ENCODE measurements at regions of chr1 and their contacts with region 1.

Region 1: DNA sequence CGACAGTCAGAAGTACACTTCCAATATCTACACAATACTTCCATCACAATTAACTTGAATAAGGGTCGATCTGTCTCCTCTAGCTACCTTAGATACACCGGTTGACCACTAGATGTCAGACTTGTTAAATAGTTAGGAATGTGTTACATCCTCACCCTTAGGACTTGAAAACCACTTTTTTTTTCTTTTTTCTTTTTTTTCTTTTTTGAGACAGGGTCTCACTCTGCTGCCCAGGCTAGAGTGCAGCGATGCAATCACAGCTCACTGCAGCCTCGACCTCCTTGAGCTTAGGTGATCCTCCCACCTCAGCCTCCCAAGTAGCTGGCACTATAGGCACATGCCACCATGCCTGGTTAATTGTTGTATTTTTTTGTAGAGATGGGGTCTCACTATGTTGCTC is 120.4 kb upstream of the GREM2 start:
- DNase-seq: peak; percentile 15 to 48
- H3K4me3 ChIP-seq: no peak overlapping the region
- H3K27ac ChIP-seq: no peak overlapping the region
- H3K4me1 ChIP-seq: no peaks in the 10 kb centered on the region
- H3K27me3 ChIP-seq: peaks cover 12% of the 10 kb centered on the region; the same call in 1 of the 2 replicates
- CTCF ChIP-seq: peak; percentile 86

Region 2: GRCh38 chr1:240149484-240150094 is 582.8 kb before region 1 on chr1:
- CTCF ChIA-PET with region 1: no interaction called
- POLR2A ChIA-PET with region 1: no interaction called
- intact Hi-C with region 1: no loop called
- DNase-seq: no peak
- H3K4me3 ChIP-seq: no peak overlapping the region
- H3K27ac ChIP-seq: no peak overlapping the region
- H3K4me1 ChIP-seq: no peaks in the 10 kb centered on the region
- H3K27me3 ChIP-seq: no peaks in the 10 kb centered on the region
- CTCF ChIP-seq: peak; percentile 78

Region 3: DNA sequence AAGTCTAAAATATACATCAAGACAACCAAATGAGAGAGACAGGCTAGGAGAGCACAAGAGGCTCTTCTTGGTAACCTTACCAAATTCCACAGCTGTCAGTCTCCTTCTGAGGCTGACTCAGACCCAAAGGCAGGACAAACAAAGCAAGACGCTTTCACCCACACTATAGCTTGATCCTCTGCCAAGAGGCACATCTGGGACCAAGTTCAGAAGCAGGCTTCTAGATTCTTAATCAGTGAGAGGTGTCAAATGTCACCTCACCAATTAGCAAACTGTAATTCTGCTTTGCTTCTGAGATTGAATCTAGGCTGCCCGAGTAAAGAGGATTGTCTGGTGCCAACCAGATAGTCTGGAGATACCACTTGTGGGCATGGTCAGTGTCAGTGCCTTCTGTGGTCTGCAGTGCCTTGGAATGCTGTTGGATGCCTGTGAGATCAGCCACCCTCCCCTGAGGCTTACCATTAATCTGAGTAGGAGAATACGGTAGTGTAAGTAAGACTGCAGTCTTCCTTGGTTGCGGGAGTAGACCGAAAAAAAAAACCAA is 489.7 kb before region 1 on chr1:
- CTCF ChIA-PET with region 1: no interaction called
- POLR2A ChIA-PET with region 1: no interaction called
- intact Hi-C with region 1: no loop called
- DNase-seq: no peak
- H3K4me3 ChIP-seq: no peak overlapping the region
- H3K27ac ChIP-seq: no peak overlapping the region
- H3K4me1 ChIP-seq: no peaks in the 10 kb centered on the region
- H3K27me3 ChIP-seq: no peaks in the 10 kb centered on the region
- CTCF ChIP-seq: no peak

Region 4: GRCh38 chr1:240784776-240785175 is 52.4 kb after region 1 on chr1:
- CTCF ChIA-PET with region 1: no interaction called
- POLR2A ChIA-PET with region 1: no interaction called
- intact Hi-C with region 1: loop called (anchors 1 kb)
- DNase-seq: no peak
- H3K4me3 ChIP-seq: no peak overlapping the region
- H3K27ac ChIP-seq: no peak overlapping the region
- H3K4me1 ChIP-seq: peaks cover 16% of the 10 kb centered on the region; the same call in 1 of the 2 replicates
- H3K27me3 ChIP-seq: no peaks in the 10 kb centered on the region
- CTCF ChIP-seq: no peak

Region 5: GRCh38 chr1:240831191-240831631 is 98.8 kb after region 1 on chr1:
- CTCF ChIA-PET with region 1: no interaction called
- POLR2A ChIA-PET with region 1: no interaction called
- intact Hi-C with region 1: loop called (anchors 2 kb)
- DNase-seq: peak; percentile 9 to 69
- H3K4me3 ChIP-seq: no peak overlapping the region
- H3K27ac ChIP-seq: no peak overlapping the region
- H3K4me1 ChIP-seq: no peaks in the 10 kb centered on the region
- H3K27me3 ChIP-seq: peaks cover 29% of the 10 kb centered on the region; the same call in 1 of the 2 replicates
- CTCF ChIP-seq: no peak

Region 6: DNA sequence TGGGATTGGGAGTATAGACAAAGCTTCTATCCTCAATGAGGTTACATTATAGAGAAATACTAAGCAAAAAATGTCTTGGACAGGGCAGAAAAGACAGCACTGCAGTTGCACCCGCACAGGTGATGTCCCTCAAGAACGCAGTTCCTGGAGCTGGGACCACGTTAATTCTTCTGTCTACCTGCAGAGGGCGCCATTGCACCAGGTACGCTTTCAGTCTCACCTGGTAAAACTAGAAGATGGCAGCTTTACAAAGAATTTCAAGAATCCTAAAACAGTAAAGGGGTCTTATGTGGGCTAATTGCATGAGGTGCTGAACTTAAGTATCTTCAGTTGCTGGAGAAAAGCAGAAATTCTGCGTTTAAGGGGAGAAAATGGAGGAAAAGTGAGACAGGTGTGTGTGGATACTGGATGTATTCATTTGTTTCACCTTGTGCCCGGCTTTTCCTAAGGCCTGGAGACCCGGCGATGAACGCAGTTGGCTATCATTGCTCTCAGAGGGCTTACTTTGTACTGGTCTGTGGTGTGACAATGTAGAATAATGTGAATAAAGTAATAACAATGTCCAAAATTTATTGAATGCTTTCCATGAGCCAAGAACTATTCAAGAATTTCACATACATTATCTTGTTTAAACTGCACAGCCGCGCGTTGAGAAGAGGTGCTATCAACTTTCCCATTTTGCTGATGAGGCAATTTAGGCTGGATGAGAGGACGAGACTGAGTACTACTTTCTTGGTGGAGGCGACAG is 155.8 kb after region 1 on chr1:
- CTCF ChIA-PET with region 1: no interaction called
- POLR2A ChIA-PET with region 1: no interaction called
- intact Hi-C with region 1: loop called (anchors 1 kb)
- DNase-seq: peak in 1 of 2 experiments; percentile 47
- H3K4me3 ChIP-seq: no peak overlapping the region
- H3K27ac ChIP-seq: no peak overlapping the region
- H3K4me1 ChIP-seq: no peaks in the 10 kb centered on the region
- H3K27me3 ChIP-seq: no peaks in the 10 kb centered on the region
- CTCF ChIP-seq: peak; percentile 92

Region 7: DNA sequence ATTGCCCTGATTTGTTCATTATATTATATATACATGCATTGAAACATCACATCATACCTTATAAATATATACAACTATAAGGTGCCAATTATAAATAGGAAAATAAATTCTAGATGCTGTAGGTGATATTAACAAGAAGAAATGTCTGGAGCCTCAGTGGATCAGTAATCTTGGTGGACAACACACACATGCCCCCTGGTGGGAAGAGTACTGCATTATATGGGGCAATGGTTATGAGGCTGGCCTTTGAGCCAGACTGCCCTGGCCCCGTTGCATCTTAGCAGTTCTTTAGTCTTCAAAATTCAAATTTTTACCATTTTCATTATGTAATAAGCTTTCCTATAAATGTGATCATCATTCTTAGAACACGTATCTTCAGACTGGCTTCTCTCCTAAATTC is 214.5 kb after region 1 on chr1:
- CTCF ChIA-PET with region 1: no interaction called
- POLR2A ChIA-PET with region 1: no interaction called
- intact Hi-C with region 1: loop called (anchors 1 kb)
- DNase-seq: peak in 1 of 2 experiments; percentile 24
- H3K4me3 ChIP-seq: no peak overlapping the region
- H3K27ac ChIP-seq: no peak overlapping the region
- H3K4me1 ChIP-seq: no peaks in the 10 kb centered on the region
- H3K27me3 ChIP-seq: peaks cover 18% of the 10 kb centered on the region; the same call in 1 of the 2 replicates
- CTCF ChIP-seq: peak; percentile 71

Region 8: GRCh38 chr1:241115784-241116183 is 383.4 kb after region 1 on chr1:
- CTCF ChIA-PET with region 1: no interaction called
- POLR2A ChIA-PET with region 1: no interaction called
- intact Hi-C with region 1: no loop called
- DNase-seq: no peak
- H3K4me3 ChIP-seq: no peak overlapping the region
- H3K27ac ChIP-seq: no peak overlapping the region
- H3K4me1 ChIP-seq: no peaks in the 10 kb centered on the region
- H3K27me3 ChIP-seq: no peaks in the 10 kb centered on the region
- CTCF ChIP-seq: no peak

Region 9: GRCh38 chr1:241499910-241500309 is 767.5 kb after region 1 on chr1:
- CTCF ChIA-PET with region 1: interaction called, 3 read pairs
- POLR2A ChIA-PET with region 1: no interaction called
- intact Hi-C with region 1: loop called (anchors 2 kb)
- DNase-seq: no peak
- H3K4me3 ChIP-seq: no peak overlapping the region
- H3K27ac ChIP-seq: no peak overlapping the region
- H3K4me1 ChIP-seq: no peaks in the 10 kb centered on the region
- H3K27me3 ChIP-seq: no peaks in the 10 kb centered on the region
- CTCF ChIP-seq: peak; percentile 68